Stomach (tissue), 19 donors: ENCODE measurements at regions of chr6 and their contacts with region 1.

Region 1: DNA sequence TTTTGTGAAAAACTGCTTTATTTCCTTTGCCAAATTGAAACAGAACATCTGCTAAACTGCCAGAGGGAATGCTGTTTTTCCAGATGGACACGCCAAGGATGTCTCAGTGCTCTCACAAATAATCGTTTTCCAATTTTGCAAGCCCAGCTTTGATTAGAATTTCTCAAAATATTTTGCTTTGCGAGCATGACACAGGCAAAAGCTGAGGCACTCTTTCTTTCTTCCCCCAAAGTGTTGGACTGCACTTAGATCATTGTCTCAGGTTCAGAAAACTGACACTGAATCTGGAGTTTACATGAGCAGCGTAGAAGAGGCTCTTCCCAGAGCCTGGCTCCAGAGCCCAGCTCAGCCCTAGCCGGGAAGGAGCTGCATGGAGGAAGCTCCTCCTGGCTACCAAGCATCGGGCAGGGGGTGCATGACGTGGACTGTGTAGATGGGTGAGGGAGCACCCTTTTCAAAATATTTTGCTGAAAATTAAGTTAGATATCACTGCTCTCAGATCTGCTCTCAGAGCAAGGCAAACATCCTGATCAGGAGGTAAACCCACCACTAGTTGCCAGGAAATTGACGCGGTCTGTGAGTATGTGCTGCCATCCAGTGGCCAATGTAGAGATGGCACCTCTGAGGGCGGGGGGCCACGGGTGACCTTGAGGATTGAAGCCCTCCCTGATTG is 107.5 kb downstream of the SLC22A3 start:
- DNase-seq: peak; percentile 68 to 86
- H3K4me3 ChIP-seq: no peak overlapping the region
- H3K27ac ChIP-seq: peak overlapping the region in 4 of 5 donors; percentile 24 to 68 (median 56)
- H3K4me1 ChIP-seq: peaks cover 6 to 20% (median 11%) of the 10 kb centered on the region in 4 donors
- H3K27me3 ChIP-seq: no peaks in the 10 kb centered on the region
- CTCF ChIP-seq: peak in 6 of 7 experiments; percentile 80 to 98 (median 97)
- EP300 ChIP-seq: no peak
- POLR2A ChIP-seq: no peak

Region 2: DNA sequence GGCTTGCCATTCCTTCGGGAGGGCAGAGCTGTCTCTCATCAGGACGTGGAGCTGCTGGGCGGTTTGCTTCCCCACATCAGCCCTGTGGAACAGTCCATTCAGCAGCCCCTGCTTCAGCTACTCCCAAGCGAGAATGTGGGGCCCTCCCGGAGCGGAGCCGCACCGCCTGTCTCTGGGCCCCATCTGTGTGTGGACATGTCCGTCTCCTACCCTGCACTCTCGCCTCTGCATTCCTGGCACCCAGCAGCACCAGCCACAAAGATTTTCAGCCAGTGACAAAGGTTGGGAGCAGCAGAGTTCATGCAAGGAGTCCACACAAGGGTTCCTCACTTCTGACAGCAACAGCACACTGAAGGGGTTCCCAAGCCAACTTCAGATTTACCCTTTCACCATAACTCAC is 363.1 kb before region 1 on chr6:
- intact Hi-C with region 1: loop called (anchors 5 kb)
- DNase-seq: no peak
- H3K4me3 ChIP-seq: no peak overlapping the region
- H3K27ac ChIP-seq: no peak overlapping the region
- H3K4me1 ChIP-seq: peaks cover 0 to 9% (median 4%) of the 10 kb centered on the region in 4 donors
- H3K27me3 ChIP-seq: no peaks in the 10 kb centered on the region
- CTCF ChIP-seq: no peak
- EP300 ChIP-seq: no peak
- POLR2A ChIP-seq: no peak

Region 3: DNA sequence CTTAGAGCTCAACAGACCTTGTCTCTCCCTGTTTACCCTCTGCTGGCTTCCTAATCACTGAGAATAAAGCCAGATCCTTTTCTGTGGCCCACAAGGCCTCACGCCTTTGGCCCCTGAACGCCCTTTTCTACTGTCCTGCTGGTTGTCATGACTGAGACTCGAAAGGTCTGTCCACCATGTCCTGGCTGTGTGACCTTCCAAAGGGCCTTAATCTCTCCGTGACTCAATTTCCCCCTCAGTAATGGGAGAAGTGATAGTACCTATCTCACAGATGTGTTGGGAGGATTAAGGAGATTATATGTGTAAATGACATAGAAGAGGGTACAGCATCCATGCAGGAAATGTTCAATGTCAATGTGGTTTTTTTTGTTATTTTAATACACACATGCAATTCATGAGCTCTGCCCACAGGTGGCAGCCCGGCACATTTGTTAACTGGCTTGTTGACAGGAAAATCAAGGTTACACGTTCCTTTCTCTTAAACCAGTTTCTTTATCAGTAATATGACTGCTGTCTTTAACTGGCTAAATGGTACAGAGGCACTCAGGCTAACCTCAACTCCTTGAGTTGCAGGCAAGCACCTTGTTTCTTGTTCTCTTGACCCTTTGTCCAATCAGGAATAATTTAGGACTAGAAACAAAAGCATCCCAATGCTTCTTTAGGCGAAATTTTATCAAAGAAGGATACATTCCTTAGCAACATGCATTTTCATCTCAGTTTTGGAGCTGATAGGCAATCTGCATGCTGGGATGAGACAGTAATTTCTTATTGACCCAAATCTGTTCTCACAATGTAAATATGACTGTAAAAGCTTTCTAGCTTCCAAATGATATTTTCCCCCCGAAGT is 317.5 kb before region 1 on chr6:
- intact Hi-C with region 1: loop called (anchors 5 kb)
- DNase-seq: peak; percentile 72 to 87
- H3K4me3 ChIP-seq: no peak overlapping the region
- H3K27ac ChIP-seq: peak overlapping the region in 3 of 5 donors; percentile 29 to 50 (median 44)
- H3K4me1 ChIP-seq: peaks cover 20 to 45% (median 29%) of the 10 kb centered on the region in 4 donors
- H3K27me3 ChIP-seq: no peaks in the 10 kb centered on the region
- CTCF ChIP-seq: peak in 5 of 7 experiments; percentile 64 to 79 (median 69)
- EP300 ChIP-seq: no peak
- POLR2A ChIP-seq: no peak

Region 4: DNA sequence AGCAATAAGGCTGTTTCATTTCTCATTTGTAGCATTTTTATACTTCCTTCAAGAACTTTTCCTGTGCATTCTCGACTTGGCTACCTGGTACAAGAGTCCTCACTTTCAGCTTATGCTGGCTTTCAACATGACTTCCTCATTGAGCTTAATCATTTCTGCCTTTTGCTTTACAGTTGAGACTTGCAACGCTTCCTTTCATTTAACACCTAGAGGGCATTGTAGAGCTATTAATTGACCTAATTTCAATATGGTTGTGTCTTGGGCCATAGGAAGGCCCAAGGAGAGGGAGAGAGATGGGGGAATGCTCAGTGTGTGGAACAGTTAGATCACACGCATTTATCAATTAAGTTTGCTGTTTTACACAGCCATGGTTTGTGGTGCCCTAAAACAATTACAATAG is 234.3 kb before region 1 on chr6:
- intact Hi-C with region 1: loop called (anchors 5 kb)
- DNase-seq: peak in 1 of 2 donors; percentile 52
- H3K4me3 ChIP-seq: no peak overlapping the region
- H3K27ac ChIP-seq: no peak overlapping the region
- H3K4me1 ChIP-seq: peaks cover 0 to 5% (median 0%) of the 10 kb centered on the region in 4 donors
- H3K27me3 ChIP-seq: peaks cover 0 to 11% (median 0%) of the 10 kb centered on the region in 3 donors
- CTCF ChIP-seq: peak in 3 of 7 experiments; percentile 7 to 37 (median 14)
- EP300 ChIP-seq: no peak
- POLR2A ChIP-seq: no peak

Region 5: DNA sequence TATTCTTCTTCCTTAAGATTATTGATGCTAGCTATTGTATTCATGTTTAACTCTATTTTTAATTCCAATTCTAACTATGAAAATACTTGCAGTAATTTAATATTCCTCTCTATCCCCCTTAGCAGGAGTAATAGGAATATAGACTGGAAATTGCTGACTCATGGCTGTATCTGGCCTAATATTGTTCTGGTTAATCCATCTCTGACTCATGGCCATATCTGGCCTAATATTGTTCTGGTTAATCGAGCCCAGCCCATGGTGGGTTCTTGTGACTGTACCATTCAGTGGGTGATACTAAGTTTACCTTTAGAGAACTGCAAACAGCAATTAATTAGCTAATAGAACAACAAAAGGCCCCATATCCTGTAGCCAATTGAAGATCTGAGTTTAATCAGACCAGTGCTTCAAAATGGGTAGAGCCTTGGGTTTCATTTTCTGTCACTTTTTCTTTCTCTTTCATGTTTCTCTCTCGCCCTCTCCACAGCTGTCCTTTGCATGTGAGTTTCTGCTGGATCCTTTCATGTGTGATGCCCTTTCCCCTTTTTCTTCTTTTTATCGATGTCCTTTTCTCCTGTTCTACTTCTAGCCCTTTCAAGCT is 56.9 kb before region 1 on chr6:
- intact Hi-C with region 1: no loop called
- DNase-seq: no peak
- H3K4me3 ChIP-seq: no peak overlapping the region
- H3K27ac ChIP-seq: peak overlapping the region in 4 of 5 donors; percentile 11 to 66 (median 50)
- H3K4me1 ChIP-seq: peaks cover 10 to 44% (median 21%) of the 10 kb centered on the region in 4 donors
- H3K27me3 ChIP-seq: no peaks in the 10 kb centered on the region
- CTCF ChIP-seq: no peak
- EP300 ChIP-seq: no peak
- POLR2A ChIP-seq: no peak

Region 6: GRCh38 chr6:160532315-160532714 is 76.6 kb after region 1 on chr6:
- intact Hi-C with region 1: no loop called
- DNase-seq: no peak
- H3K4me3 ChIP-seq: no peak overlapping the region
- H3K27ac ChIP-seq: no peak overlapping the region
- H3K4me1 ChIP-seq: peaks cover 0 to 5% (median 2%) of the 10 kb centered on the region in 4 donors
- H3K27me3 ChIP-seq: peaks cover 0 to 3% (median 0%) of the 10 kb centered on the region in 3 donors
- CTCF ChIP-seq: no peak
- EP300 ChIP-seq: no peak
- POLR2A ChIP-seq: no peak